ENCODE measurements at regions of chr15 and their contacts with region 1.

Region 1: GRCh38 chr15:44066316-44066740 is 128.7 kb downstream of the FRMD5 start:
- DNase-seq: peak in 1 of 2 donors; percentile 20
- ATAC-seq: no peak
- H3K4me3 ChIP-seq: no peak overlapping the region
- H3K27ac ChIP-seq: no peak overlapping the region
- H3K4me1 ChIP-seq: no peaks in the 10 kb centered on the region
- H3K27me3 ChIP-seq: no peaks in the 10 kb centered on the region
- CTCF ChIP-seq: peak; percentile 54

Region 2: GRCh38 chr15:43872416-43873020 is 193.8 kb before region 1 on chr15:
- intact Hi-C with region 1: loop called in 1 of 2 experiments (anchors 10 kb)
- DNase-seq: no peak
- ATAC-seq: peak in 1 of 4 donors; percentile 37
- H3K4me3 ChIP-seq: no peak overlapping the region
- H3K27ac ChIP-seq: no peak overlapping the region
- H3K4me1 ChIP-seq: no peaks in the 10 kb centered on the region
- H3K27me3 ChIP-seq: no peaks in the 10 kb centered on the region
- CTCF ChIP-seq: peak; percentile 40

Region 3: GRCh38 chr15:43893956-43894355 is 172.4 kb before region 1 on chr15:
- intact Hi-C with region 1: loop called in 1 of 2 experiments (anchors 10 kb)
- DNase-seq: no peak
- ATAC-seq: no peak
- H3K4me3 ChIP-seq: no peak overlapping the region
- H3K27ac ChIP-seq: no peak overlapping the region
- H3K4me1 ChIP-seq: no peaks in the 10 kb centered on the region
- H3K27me3 ChIP-seq: no peaks in the 10 kb centered on the region
- CTCF ChIP-seq: no peak

Region 4: DNA sequence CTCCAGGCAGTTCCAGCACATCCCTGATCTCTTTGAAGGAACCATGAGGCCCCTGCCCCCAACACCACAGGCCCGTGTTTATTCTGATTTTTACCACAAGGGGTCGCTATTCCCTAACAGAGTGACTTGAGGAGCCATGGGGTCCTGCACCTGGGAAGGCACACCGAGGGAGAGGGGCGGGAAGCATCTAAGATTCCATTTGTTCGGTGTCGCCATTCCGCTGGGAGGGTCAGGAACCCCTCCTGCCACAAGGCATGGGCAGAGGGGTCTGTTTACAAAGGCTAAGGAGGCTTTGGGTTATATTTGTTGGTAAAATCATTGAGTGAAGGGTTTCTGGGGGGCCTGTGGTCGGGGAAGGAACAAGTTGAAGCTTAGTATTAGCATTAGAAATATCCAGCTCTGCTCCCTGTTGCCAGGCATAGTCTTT is 162.5 kb before region 1 on chr15:
- intact Hi-C with region 1: loop called (anchors 5 to 10 kb)
- DNase-seq: no peak
- ATAC-seq: peak in 1 of 4 donors; percentile 64
- H3K4me3 ChIP-seq: no peak overlapping the region
- H3K27ac ChIP-seq: no peak overlapping the region
- H3K4me1 ChIP-seq: no peaks in the 10 kb centered on the region
- H3K27me3 ChIP-seq: no peaks in the 10 kb centered on the region
- CTCF ChIP-seq: peak; percentile 59

Region 5: DNA sequence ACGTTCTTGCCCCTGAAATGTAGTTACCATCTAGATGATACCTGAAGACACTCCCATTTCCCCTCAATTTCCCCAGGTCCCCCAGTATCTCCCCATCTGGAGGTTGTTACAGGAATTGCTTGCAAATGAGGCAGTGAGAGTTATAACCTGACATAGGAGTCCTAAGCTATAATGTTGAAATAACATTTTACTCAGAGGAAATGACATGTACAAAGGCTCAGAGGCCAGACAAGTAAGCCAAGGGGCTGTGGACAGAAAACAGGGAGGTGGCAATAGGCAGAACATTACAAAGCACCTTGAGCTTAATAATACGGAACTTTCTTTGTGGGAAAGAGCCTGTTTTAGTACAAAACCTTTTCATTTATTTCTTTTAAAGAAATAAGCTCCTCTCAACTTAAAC is 43.2 kb before region 1 on chr15:
- intact Hi-C with region 1: loop called in 1 of 2 experiments (anchors 5 kb)
- DNase-seq: no peak
- ATAC-seq: no peak
- H3K4me3 ChIP-seq: no peak overlapping the region
- H3K27ac ChIP-seq: no peak overlapping the region
- H3K4me1 ChIP-seq: no peaks in the 10 kb centered on the region
- H3K27me3 ChIP-seq: peaks cover 0 to 2% (median 0%) of the 10 kb centered on the region in 3 donors
- CTCF ChIP-seq: no peak